HEK293 (cell line): ENCODE measurements at regions of chr19 and their contacts with region 1.

Region 1: GRCh38 chr19:39671738-39672363 is 16.1 kb downstream of the LGALS16 start:
- H3K4me3 ChIP-seq: no peak overlapping the region
- H3K27ac ChIP-seq: no peak overlapping the region
- H3K4me1 ChIP-seq: no peaks in the 10 kb centered on the region
- CTCF ChIP-seq: peak; percentile 94

Region 2: DNA sequence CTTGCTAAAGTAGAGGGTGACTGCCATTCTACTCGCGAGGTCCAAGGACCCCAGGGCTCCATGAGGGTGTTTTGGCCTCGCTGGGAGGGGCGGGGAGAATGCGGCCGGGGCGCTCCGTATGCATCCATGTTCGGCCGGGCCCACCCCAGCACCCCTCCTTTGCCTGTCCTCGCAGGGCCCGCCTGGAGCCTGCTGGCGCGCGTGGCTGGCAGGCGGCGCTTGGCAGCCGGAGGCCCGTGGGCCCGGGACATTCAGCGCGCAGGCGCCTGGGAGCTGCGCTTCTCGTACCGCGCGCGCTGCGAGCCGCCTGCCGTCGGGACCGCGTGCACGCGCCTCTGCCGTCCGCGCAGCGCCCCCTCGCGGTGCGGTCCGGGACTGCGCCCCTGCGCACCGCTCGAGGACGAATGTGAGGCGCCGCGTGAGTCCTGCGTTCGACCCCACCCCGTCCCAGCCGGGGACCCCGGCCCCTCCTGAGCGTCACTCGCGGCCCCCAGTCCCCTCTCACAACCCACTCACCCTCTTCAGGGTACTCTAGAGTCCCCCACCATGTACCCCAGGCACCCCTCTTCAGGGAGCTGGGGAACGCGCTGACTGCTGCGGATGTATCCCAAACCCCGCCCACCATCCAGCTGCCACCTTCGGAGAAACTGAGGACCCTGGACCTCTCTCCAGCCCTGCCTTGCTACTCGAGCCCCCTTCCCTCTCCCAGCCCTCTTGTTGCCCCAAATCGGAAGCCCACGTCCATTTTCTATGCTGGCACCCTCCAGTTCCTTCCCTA is 169.0 kb before region 1 on chr19:
- CTCF ChIA-PET with region 1: interaction called, 10 read pairs
- POLR2A ChIA-PET with region 1: no interaction called
- H3K4me3 ChIP-seq: no peak overlapping the region
- H3K27ac ChIP-seq: no peak overlapping the region
- H3K4me1 ChIP-seq: peaks cover 19% of the 10 kb centered on the region
- CTCF ChIP-seq: peak; percentile 71

Region 3: GRCh38 chr19:39532233-39533002 is 139.4 kb before region 1 on chr19 and contains the start of gene EID2B:
- CTCF ChIA-PET with region 1: interaction called, 10 read pairs
- POLR2A ChIA-PET with region 1: interaction called, 3 read pairs
- H3K4me3 ChIP-seq: peak within 1 kb of the TSS; percentile 88
- H3K27ac ChIP-seq: peak within 1 kb of the TSS; percentile 85
- H3K4me1 ChIP-seq: peaks cover 20% of the 10 kb centered on the region
- CTCF ChIP-seq: peak; percentile 100

Region 4: GRCh38 chr19:39539519-39540332 is 132.1 kb before region 1 on chr19 and contains the start of gene EID2:
- CTCF ChIA-PET with region 1: interaction called, 24 read pairs
- POLR2A ChIA-PET with region 1: no interaction called
- H3K4me3 ChIP-seq: peak within 1 kb of the TSS; percentile 83
- H3K27ac ChIP-seq: peak within 1 kb of the TSS; percentile 97
- H3K4me1 ChIP-seq: peaks cover 16% of the 10 kb centered on the region
- CTCF ChIP-seq: peak; percentile 97

Region 5: GRCh38 chr19:39546599-39546998 is 125.3 kb before region 1 on chr19:
- CTCF ChIA-PET with region 1: interaction called, 148 read pairs
- POLR2A ChIA-PET with region 1: no interaction called
- H3K4me3 ChIP-seq: no peak overlapping the region
- H3K27ac ChIP-seq: no peak overlapping the region
- H3K4me1 ChIP-seq: peaks cover 3% of the 10 kb centered on the region; the same call in 1 of the 2 replicates
- CTCF ChIP-seq: no peak

Region 6: DNA sequence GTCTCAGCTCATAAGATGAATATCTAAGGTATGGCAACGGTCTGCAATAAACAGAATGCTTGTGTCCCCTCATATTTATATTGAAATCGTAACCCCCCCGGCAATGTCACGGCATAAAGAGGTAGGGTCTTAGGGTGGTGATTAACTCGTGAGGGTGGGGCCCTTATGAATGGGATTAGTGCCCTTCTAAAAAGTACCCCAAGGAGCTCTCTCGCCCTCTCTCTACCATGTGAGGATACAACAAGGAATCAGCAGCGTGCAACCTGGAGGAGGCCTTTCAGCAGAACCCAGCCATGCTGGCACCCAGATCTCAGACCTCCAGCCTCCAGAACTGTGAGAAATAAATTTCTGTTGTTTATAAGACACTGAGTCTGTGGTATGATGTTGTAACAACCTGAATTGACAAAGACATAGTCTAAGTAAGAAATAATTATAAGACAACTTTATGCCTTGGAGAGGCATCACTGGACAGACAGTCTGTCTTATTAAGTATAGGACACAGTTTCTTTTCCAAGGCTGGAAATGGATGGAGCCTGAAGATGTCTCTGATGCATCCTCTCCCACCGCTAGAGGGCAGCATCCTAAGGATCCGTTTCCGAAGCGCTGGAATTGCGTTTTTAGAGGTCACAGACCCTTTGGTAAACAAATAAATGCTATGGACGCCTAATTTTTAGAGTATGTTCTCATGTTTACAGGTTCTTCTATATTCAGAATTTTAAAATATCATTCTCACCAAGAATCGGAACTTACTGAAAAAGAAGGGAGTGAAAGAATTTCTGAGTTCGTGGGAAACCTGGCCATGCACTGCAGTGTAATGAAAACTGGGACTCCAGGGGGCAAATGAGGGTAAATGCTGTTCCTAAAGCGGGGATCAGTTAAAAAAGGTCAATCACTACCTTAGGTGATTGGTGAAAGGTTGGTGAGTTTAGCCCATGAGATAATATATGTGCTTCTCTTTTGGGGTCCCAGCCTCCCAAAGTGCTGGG is 93.5 kb after region 1 on chr19:
- CTCF ChIA-PET with region 1: interaction called, 20 read pairs
- POLR2A ChIA-PET with region 1: no interaction called
- H3K4me3 ChIP-seq: no peak overlapping the region
- H3K27ac ChIP-seq: no peak overlapping the region
- H3K4me1 ChIP-seq: peaks cover 6% of the 10 kb centered on the region
- CTCF ChIP-seq: peak; percentile 31; the same call in 1 of the 2 replicates

Region 7: DNA sequence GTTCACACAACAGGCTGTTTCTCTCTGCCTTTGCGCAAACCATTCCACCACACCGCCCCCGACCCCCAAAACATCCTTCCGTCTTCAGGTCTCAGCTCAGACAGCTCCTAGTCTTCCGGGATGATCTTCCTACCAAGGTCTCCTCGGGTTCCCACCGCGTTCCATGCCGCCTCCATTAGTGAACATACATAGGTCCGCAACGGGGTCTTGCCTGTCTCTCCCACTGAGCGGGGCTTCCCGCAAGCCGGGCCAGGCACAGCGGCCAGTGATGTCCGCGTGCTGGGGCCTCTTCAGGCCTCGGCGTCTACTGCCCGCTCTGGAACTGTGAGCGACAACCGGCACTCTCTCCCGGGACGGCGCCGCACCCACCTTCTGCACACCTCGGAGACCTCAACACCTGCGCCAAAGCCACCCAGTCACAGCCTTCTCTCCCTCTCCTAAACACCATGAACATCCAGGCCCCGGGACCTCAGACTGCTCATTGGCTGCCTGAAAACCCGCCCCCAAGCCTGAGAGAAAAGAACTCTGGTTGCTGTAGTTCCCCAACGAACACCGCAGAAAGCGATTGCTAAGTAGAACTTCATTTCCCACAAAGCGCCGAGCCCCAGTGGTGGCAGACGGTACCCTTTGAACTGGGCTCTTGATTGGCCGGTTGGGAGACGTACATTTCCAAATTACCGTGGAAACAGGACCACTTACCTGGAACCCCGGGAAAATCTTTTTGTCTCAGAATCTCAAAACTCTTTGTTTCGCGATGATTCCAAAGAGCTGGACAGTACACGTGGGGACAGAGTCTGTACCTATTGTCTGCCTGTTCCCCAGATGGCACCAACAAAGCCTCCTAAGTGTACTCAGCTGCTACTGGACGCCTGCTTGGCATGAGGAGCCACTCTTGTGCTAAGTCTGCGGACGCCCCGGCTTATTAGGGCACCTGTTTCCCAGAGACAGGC is 152.6 kb after region 1 on chr19:
- CTCF ChIA-PET with region 1: interaction called, 11 read pairs
- POLR2A ChIA-PET with region 1: no interaction called
- H3K4me3 ChIP-seq: peak overlapping the region; percentile 59
- H3K27ac ChIP-seq: peak overlapping the region; percentile 75
- H3K4me1 ChIP-seq: peaks cover 12% of the 10 kb centered on the region
- CTCF ChIP-seq: no peak